ENCODE measurements at regions of chr6 and their contacts with region 1.

Region 1: DNA sequence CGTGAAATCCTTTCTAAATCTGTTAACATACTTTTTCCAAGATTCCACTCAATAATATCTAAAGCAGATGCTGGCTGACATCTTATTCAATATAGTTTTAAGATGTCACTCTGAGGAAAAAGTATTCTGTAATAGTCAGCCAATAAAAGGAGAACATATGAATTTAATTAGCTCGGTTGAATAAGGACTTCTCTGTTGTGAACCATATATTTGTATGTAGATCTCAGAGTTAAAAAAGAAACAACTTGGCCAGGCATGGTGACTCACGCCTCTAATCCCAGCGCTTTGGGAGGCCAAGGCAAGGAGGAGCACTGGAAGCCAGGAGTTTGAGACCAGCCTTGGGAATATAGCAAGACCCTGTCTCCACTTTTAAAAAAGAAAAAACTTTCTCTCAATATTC is 7.4 kb upstream of the CD24 start:
- DNase-seq: peak; percentile 39
- H3K4me3 ChIP-seq: no peak overlapping the region
- H3K27ac ChIP-seq: no peak overlapping the region
- H3K4me1 ChIP-seq: no peaks in the 10 kb centered on the region
- H3K27me3 ChIP-seq: peaks cover 7% of the 10 kb centered on the region; the same call in 1 of the 2 replicates

Region 2: GRCh38 chr6:106339334-106340029 is 642.4 kb before region 1 on chr6:
- in situ Hi-C with region 1: loop called (anchors 10 kb)
- DNase-seq: peak; percentile 91
- H3K4me3 ChIP-seq: no peak overlapping the region
- H3K27ac ChIP-seq: no peak overlapping the region
- H3K4me1 ChIP-seq: no peaks in the 10 kb centered on the region
- H3K27me3 ChIP-seq: peaks cover 7% of the 10 kb centered on the region; the same call in 1 of the 2 replicates

Region 3: GRCh38 chr6:106444777-106445507 is 537.0 kb before region 1 on chr6:
- in situ Hi-C with region 1: loop called (anchors 10 kb)
- DNase-seq: peak; percentile 77
- H3K4me3 ChIP-seq: no peak overlapping the region
- H3K27ac ChIP-seq: no peak overlapping the region
- H3K4me1 ChIP-seq: no peaks in the 10 kb centered on the region
- H3K27me3 ChIP-seq: peaks cover 39% of the 10 kb centered on the region

Region 4: DNA sequence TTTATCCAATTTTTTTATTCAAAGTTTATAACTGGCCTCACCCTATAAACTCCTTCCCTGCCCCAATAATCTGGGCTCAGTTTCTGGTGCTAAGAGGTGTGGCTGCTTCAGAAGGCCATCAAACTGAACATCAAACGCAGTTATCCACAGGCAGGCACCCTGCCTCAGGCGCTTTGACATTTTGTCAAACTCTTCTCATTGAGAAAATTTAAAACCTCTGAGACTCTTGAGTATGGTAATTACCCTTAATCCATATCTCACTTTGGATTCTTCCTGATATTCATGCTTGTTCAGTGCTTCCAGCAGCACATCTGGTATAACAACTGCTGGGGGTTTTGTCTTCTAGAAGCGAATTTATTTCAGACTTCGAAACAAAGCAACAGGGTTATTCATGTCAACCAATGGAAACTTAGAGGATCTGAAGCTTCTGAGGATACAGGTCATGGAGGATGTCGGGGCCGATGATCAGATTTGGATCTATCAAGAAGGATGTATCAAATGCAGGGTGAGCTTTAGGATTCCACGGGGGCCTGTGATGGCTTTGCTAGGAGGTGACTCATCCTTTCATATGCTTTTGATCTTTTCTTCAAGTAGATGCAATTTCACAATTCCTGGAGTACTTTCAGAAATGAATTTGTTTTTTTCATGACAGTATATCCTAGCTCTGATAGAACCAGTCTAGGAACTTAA is 420.8 kb before region 1 on chr6:
- in situ Hi-C with region 1: loop called (anchors 10 kb)
- DNase-seq: peak; percentile 90
- H3K4me3 ChIP-seq: no peak overlapping the region
- H3K27ac ChIP-seq: 0 out of 2 replicates have a peak overlapping the region, but pooled peaks have one; percentile 13
- H3K4me1 ChIP-seq: peaks cover 22% of the 10 kb centered on the region
- H3K27me3 ChIP-seq: no peaks in the 10 kb centered on the region

Region 5: DNA sequence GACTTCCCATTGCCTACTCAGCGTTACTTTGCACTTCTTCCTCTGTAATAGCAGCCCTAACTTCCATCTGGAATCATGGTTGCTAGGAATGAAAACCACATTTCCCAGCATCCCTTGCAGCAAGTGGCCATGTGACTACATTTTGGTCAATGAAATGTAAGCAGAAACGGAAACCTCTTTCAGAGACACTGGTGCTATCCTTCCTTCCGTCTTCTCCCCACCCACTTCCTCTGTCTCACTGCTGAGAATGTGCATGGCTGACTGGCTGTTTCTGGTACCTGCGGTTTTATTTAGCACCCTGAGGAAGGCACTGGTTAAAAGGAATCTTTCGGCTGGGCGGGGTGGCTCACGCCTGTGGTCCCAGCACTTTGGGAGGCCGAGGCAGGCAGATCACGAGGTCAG is 734.8 kb after region 1 on chr6:
- in situ Hi-C with region 1: no loop called
- DNase-seq: peak; percentile 32
- H3K4me3 ChIP-seq: no peak overlapping the region
- H3K27ac ChIP-seq: no peak overlapping the region
- H3K4me1 ChIP-seq: peaks cover 9% of the 10 kb centered on the region
- H3K27me3 ChIP-seq: 0 out of 2 replicates have a peak, but pooled peaks cover 10% of the 10 kb centered on the region